Activated T-helper 1 cell treated with anti-CD3 and anti-CD28 coated beads, Interleukin-12 subunit alpha, Interleukin-12 subunit beta, Interleukin-2, Interleukin-4 antibody, amounts not matched to agents 30 ng/mL and 10 ng/mL and 1 ng/mL, durations not matched to agents 14 hours and 24 hours and 36 hours (primary cell): ENCODE measurements at regions of chrX and their contacts with region 1.

Region 1: GRCh38 chrX:23732704-23733103 is 10.4 kb downstream of the ACOT9 start:
- DNase-seq: no peak
- H3K4me3 Mint-ChIP-seq: peak overlapping the region; percentile 30
- H3K27ac Mint-ChIP-seq: peak overlapping the region; percentile 83
- H3K4me1 Mint-ChIP-seq: peaks cover 29% of the 10 kb centered on the region
- H3K27me3 Mint-ChIP-seq: no peaks in the 10 kb centered on the region

Region 2: DNA sequence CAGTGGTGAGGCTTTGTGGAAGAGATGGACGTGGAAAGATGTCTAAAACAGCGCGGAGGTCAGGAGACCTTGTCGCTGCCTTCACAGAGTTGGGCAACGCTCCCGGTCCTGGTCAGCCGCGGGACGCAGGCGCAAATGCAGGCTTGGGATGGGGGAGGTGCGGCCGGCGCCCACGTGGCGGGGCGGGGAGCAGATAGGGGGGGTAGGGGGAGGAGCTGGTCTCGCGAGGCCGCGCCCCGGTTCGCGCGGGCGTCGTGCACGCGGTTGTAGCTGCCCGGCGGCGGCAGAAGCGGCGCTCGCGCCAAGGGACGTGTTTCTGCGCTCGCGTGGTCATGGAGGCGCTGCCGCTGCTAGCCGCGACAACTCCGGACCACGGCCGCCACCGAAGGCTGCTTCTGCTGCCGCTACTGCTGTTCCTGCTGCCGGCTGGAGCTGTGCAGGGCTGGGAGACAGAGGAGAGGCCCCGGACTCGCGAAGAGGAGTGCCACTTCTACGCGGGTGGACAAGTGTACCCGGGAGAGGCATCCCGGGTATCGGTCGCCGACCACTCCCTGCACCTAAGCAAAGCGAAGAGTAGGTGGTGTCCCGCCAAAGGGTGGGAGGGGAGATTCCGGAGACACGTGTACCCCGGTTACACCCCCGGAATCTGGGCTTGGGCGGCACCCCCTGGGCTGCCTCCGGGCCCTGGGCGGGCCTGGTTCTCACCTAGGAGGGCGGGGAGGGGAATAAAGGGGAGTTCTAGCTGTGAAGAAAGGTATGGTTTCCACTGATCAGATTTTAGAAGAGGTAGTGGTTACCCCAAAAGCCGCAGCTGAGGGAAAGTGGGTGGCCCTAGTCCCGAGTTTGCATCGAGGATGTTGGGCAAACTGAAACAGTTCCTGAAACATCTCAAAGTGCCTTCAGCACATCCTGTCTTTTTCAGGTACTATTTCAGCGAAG is 65.2 kb before region 1 on chrX and contains the start of gene PRDX4:
- intact Hi-C with region 1: loop called (anchors 2 kb)
- DNase-seq: peak; percentile 66
- H3K4me3 Mint-ChIP-seq: peak within 1 kb of the TSS; percentile 88
- H3K27ac Mint-ChIP-seq: peak within 1 kb of the TSS; percentile 94
- H3K4me1 Mint-ChIP-seq: peaks cover 37% of the 10 kb centered on the region
- H3K27me3 Mint-ChIP-seq: no peaks in the 10 kb centered on the region
- total RNA-seq, gene PRDX4: 75.5 and 83.2 TPM in 2 replicates

Region 3: DNA sequence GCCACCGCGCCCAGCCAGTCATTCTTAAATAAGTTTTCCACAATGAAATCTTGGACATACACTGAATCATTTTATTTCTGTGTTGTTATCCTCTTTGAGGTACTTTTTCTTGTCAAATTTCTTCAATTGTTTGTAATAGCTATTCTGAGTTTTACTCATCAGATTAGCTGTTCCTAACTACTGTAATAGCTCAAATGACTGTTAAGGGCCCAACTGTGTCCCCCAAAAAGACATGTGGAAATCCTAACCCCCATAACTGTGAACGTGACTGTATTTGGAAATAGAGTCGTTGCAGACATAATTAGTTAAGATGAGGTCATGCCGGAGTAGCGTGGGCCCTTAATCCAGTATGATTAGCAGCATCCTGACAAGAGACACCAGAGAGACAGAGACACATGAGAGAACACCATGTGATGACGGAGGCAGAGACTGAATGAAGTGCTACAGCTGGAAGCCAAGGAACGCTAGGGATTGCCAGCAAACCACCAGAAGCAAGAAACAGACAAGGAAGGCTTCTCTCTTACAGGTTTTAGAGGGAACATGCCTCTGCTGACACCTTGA is 12.5 kb before region 1 on chrX:
- intact Hi-C with region 1: no loop called
- DNase-seq: no peak
- H3K4me3 Mint-ChIP-seq: no peak overlapping the region
- H3K27ac Mint-ChIP-seq: peak overlapping the region; percentile 16
- H3K4me1 Mint-ChIP-seq: no peaks in the 10 kb centered on the region
- H3K27me3 Mint-ChIP-seq: no peaks in the 10 kb centered on the region

Region 4: GRCh38 chrX:23742697-23743622 is 10.3 kb after region 1 on chrX and contains the start of gene ACOT9:
- intact Hi-C with region 1: loop called (anchors 1 kb)
- DNase-seq: peak; percentile 77
- H3K4me3 Mint-ChIP-seq: peak within 1 kb of the TSS; percentile 93
- H3K27ac Mint-ChIP-seq: peak within 1 kb of the TSS; percentile 92
- H3K4me1 Mint-ChIP-seq: peaks cover 29% of the 10 kb centered on the region
- H3K27me3 Mint-ChIP-seq: no peaks in the 10 kb centered on the region
- total RNA-seq, gene ACOT9: 58.3 and 60.3 TPM in 2 replicates

Region 5: GRCh38 chrX:23773601-23774175 is 41.0 kb after region 1 on chrX:
- intact Hi-C with region 1: loop called (anchors 2 kb)
- DNase-seq: peak; percentile 41
- H3K4me3 Mint-ChIP-seq: peak overlapping the region; percentile 73
- H3K27ac Mint-ChIP-seq: peak overlapping the region; percentile 87
- H3K4me1 Mint-ChIP-seq: peaks cover 12% of the 10 kb centered on the region
- H3K27me3 Mint-ChIP-seq: no peaks in the 10 kb centered on the region

Region 6: GRCh38 chrX:24014388-24015018 is 281.8 kb after region 1 on chrX:
- intact Hi-C with region 1: loop called (anchors 2 kb)
- DNase-seq: peak; percentile 21
- H3K4me3 Mint-ChIP-seq: peak overlapping the region; percentile 64
- H3K27ac Mint-ChIP-seq: peak overlapping the region; percentile 89
- H3K4me1 Mint-ChIP-seq: peaks cover 36% of the 10 kb centered on the region
- H3K27me3 Mint-ChIP-seq: no peaks in the 10 kb centered on the region